Heart right ventricle (tissue), 16 donors: ENCODE measurements at regions of chr10 and their contacts with region 1.

Region 1: GRCh38 chr10:95374597-95375209 is 83.9 kb upstream of the PDLIM1 start:
- DNase-seq: peak; percentile 69 to 86
- ATAC-seq: peak; percentile 78 to 93 (median 88)
- H3K4me3 ChIP-seq: no peak overlapping the region
- H3K27ac ChIP-seq: peak overlapping the region in 5 of 10 donors; percentile 4 to 72 (median 17)
- H3K4me1 ChIP-seq: peaks cover 19 to 61% (median 31%) of the 10 kb centered on the region in 9 donors
- H3K27me3 ChIP-seq: no peaks in the 10 kb centered on the region
- CTCF ChIP-seq: peak; percentile 93 to 97 (median 95)

Region 2: DNA sequence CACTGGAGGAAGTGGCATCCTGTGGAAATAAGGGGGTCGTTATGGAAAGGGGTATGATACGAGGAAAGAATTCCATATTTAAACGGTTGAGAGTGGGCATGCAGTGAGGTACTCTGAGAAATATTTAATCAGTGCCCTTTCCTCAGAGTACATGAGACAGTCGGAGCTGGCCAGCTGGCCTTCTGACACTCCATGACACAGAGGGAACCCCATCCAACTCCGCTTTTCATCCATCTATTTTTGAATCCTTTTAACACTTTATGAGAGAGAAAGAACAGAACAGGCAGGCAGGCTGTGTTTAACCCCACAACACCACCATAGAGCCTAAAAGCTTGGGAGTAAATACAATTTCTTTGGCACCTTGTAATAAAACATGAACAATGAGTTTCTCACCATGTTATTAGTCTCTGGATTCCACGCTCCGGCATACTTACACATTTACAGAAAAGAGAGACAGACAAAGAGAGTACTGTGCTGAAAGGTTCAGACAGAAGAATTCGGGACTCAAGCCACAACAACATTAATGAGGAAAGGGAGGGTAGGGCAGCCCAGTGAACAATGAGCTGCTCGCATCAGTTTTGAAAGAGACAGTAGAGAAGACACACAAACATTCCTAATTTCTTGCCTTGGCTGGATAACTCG is 40.3 kb after region 1 on chr10:
- intact Hi-C with region 1: loop called in 5 of 10 experiments (anchors 5 to 10 kb)
- DNase-seq: peak; percentile 50 to 74
- ATAC-seq: peak; percentile 64 to 90 (median 84)
- H3K4me3 ChIP-seq: peak overlapping the region; percentile 16 to 56 (median 50)
- H3K27ac ChIP-seq: peak overlapping the region; percentile 83 to 97 (median 93)
- H3K4me1 ChIP-seq: peaks cover 11 to 91% (median 67%) of the 10 kb centered on the region in 9 donors
- H3K27me3 ChIP-seq: no peaks in the 10 kb centered on the region
- CTCF ChIP-seq: no peak

Region 3: DNA sequence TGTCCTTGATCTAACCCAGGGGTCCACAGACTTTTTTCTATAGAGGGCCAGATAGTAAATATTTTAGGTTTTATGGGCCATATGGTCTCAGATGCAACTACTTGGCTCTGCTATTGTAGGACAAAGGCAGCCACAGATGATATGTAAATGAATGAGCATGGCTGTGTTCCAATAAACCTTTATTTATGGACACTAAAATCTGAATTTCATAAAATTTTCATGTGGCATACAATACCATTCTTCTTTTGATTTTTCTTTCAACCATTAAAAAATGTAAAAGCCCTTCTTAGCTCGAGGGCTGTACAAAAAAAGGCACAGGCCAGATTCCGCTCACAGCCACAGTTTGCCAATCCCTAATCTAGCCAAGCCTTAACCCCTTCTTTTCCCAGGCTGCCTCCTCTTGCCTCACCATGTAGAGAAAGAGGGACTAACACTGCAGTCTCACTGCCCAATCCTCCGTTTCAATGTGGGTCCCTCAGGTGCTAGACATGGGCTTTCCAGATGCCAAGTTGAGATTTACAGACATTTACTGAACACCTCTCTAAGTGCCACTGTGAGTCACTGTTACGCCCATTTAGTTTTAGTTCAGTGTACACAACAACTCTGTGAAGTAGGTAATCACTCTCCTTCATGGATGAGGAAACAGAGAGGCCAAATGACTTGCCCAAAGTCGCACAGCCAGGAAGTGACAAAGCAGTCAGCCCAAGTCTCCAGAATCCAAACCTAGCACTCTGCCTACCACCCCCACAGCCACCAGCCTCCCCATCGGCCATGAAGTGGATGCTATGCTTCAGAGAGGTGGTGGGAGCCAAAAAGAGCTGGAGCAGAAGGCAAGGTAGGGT is 48.7 kb after region 1 on chr10:
- intact Hi-C with region 1: loop called in 7 of 10 experiments (anchors 5 to 10 kb)
- DNase-seq: no peak
- ATAC-seq: peak in 3 of 8 donors; percentile 14 to 37 (median 15)
- H3K4me3 ChIP-seq: no peak overlapping the region
- H3K27ac ChIP-seq: peak overlapping the region in 9 of 10 donors; percentile 8 to 97 (median 63)
- H3K4me1 ChIP-seq: peaks cover 6 to 91% (median 60%) of the 10 kb centered on the region in 9 donors
- H3K27me3 ChIP-seq: no peaks in the 10 kb centered on the region
- CTCF ChIP-seq: no peak

Region 4: GRCh38 chr10:95430231-95430951 is 55.7 kb after region 1 on chr10:
- intact Hi-C with region 1: loop called in 7 of 10 experiments (anchors 5 to 10 kb)
- DNase-seq: peak in 1 of 2 donors; percentile 59
- ATAC-seq: peak; percentile 71 to 80 (median 77)
- H3K4me3 ChIP-seq: no peak overlapping the region
- H3K27ac ChIP-seq: peak overlapping the region in 8 of 10 donors; percentile 50 to 95 (median 80)
- H3K4me1 ChIP-seq: peaks cover 46 to 100% (median 92%) of the 10 kb centered on the region in 9 donors
- H3K27me3 ChIP-seq: no peaks in the 10 kb centered on the region
- CTCF ChIP-seq: peak; percentile 94 to 98 (median 97)

Region 5: DNA sequence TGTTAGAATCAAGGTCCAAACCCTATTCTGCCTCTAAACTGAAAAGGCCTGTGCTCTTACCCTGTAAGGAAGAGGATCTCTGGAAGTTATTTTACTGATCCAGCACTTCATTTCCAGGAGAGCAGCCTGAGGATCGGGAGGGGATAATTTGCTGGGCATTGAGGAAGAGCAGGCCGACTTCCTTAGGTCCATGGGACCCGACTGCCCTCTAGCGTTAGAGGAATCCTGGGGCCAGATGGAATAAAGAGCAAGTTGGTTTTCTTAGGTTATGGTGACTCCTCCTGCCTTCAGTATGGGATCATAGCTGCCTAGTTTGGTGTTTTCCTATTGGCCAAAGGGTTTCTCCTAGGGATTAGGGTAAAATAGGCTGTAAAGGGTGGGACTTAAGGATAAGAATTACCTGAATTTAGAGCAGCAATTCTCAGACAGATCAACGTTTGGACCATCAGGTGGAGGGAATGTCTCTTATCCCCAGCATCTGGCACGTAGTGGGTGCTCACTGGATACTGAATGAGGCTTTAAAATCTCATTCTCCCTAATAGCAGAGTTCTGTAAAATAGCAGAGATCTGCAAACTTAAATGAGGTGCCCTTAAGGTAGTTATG is 226.5 kb after region 1 on chr10:
- intact Hi-C with region 1: loop called in 9 of 10 experiments (anchors 1 to 5 kb)
- DNase-seq: peak; percentile 66 to 85
- ATAC-seq: peak; percentile 80 to 93 (median 88)
- H3K4me3 ChIP-seq: no peak overlapping the region
- H3K27ac ChIP-seq: peak overlapping the region in 2 of 10 donors; percentile 15 to 22
- H3K4me1 ChIP-seq: peaks cover 0 to 27% (median 18%) of the 10 kb centered on the region in 9 donors
- H3K27me3 ChIP-seq: no peaks in the 10 kb centered on the region
- CTCF ChIP-seq: peak; percentile 87 to 99 (median 95)

Region 6: DNA sequence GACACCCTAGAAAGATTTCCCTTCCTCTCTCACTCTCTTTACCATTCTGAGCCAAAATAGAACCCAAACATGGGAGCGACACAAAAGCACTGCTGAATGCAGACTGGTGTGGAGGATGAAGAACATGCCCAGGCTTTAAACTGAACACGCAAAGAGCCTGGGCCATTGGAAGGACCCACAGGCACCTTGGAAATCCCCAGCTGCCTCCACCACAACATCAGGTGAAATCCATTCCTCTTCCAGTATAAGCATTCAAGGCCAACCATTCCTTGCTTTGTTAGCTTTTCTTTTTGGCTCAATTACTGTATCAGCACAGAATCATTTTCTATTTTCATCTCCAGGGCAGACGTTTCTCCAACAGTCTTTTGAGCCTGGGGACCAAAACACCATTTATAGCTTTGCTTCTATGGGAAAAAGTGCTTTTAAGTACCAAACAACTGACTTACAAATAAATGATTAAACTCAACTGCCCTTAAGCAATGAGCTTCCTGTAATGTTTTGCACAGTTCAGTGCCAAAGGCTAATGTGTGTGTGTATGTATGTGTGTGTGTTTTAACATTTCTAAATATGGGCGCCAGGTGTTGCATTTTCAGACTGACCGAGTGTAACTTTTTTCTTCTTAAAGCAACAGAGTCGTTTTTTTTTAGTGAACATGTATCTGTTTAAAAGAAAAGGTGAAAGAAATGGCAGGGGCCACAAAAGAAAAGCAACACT is 912.8 kb after region 1 on chr10:
- intact Hi-C with region 1: no loop called
- DNase-seq: no peak
- ATAC-seq: peak in 1 of 8 donors; percentile 37
- H3K4me3 ChIP-seq: no peak overlapping the region
- H3K27ac ChIP-seq: no peak overlapping the region
- H3K4me1 ChIP-seq: peaks cover 0 to 6% (median 0%) of the 10 kb centered on the region in 9 donors
- H3K27me3 ChIP-seq: peaks cover 0 to 48% (median 12%) of the 10 kb centered on the region in 7 donors
- CTCF ChIP-seq: no peak